Endothelial cell of umbilical vein (primary cell): ENCODE measurements at regions of chr10 and their contacts with region 1.

Region 1: GRCh38 chr10:15719899-15720634 is at the start of gene ITGA8:
- DNase-seq: peak; percentile 22
- H3K4me3 ChIP-seq: peak within 1 kb of the TSS in 2 of 3 experiments; percentile 6 to 25
- H3K27ac ChIP-seq: no peak within 1 kb of the TSS
- H3K4me1 ChIP-seq: peaks cover 4% of the 10 kb centered on the region
- H3K27me3 ChIP-seq: peaks cover 27 to 30% of the 10 kb centered on the region in 2 experiments
- CTCF ChIP-seq: peak; percentile 50 to 53
- POLR2A ChIP-seq: no peak
- total RNA-seq, gene ITGA8: 0.12 and 0.40 TPM in 2 replicates

Region 2: DNA sequence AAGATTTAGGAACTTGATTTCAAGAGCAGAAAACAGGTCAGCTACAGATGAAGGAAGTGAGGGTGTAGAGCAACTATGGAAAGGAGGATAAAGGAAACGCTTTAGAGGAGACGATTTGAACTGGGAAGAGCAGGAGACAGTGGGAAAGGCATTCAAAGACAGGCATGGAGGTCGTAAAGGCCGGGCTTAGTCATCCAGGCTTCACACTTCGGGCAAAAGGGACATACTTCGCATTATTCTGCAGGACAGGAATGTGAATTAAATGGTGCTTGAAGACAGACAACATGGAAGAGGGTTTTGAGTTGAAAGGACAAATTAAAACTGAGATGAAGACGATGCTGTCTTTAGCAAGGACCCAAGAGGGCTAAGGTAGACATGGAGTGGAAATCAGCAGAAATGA is 357.0 kb before region 1 on chr10:
- CTCF ChIA-PET with region 1: no interaction called
- POLR2A ChIA-PET with region 1: no interaction called
- dilution Hi-C with region 1: no loop called
- intact Hi-C with region 1: no loop called
- DNase-seq: no peak
- H3K4me3 ChIP-seq: no peak overlapping the region
- H3K27ac ChIP-seq: no peak overlapping the region
- H3K4me1 ChIP-seq: peaks cover 15% of the 10 kb centered on the region
- H3K27me3 ChIP-seq: no peaks in the 10 kb centered on the region
- CTCF ChIP-seq: no peak
- POLR2A ChIP-seq: no peak

Region 3: GRCh38 chr10:15427843-15428414 is 292.1 kb before region 1 on chr10:
- CTCF ChIA-PET with region 1: interaction called, 57 read pairs
- POLR2A ChIA-PET with region 1: no interaction called
- dilution Hi-C with region 1: no loop called
- intact Hi-C with region 1: no loop called
- DNase-seq: peak; percentile 67
- H3K4me3 ChIP-seq: no peak overlapping the region
- H3K27ac ChIP-seq: no peak overlapping the region
- H3K4me1 ChIP-seq: peaks cover 3% of the 10 kb centered on the region
- H3K27me3 ChIP-seq: peaks cover 0 to 2% of the 10 kb centered on the region in 2 experiments
- CTCF ChIP-seq: peak; percentile 33 to 36
- POLR2A ChIP-seq: no peak

Region 4: DNA sequence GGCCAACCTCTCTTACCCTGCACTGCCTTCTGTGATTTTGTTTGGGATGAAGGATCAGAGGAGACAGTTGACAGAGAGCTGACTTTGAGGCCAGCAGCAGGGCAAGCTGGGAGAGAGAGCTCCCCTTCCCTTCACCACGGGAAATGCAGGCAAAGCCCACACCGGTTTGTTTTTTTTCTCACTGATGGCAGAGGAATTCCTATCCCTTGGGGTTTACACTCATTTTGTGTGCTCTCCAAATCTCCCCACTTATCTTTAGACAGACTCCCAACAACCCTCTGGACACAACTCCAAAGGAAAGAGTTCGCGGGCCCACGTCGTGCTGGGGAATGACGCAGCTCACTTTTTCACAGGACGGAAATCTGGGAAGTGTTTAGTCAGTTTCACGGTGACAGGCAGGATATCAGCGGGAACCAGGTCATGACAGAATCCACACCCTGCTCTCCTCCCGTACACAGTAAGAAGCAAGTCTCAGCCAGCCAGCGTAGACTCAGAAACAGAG is 280.7 kb before region 1 on chr10:
- CTCF ChIA-PET with region 1: interaction called, 42 read pairs
- POLR2A ChIA-PET with region 1: no interaction called
- dilution Hi-C with region 1: no loop called
- intact Hi-C with region 1: loop called (anchors 1 kb)
- DNase-seq: peak; percentile 62
- H3K4me3 ChIP-seq: peak overlapping the region in 2 of 3 experiments; percentile 1 to 18
- H3K27ac ChIP-seq: peak overlapping the region; percentile 25
- H3K4me1 ChIP-seq: peaks cover 13% of the 10 kb centered on the region
- H3K27me3 ChIP-seq: peaks cover 0 to 3% of the 10 kb centered on the region in 2 experiments
- CTCF ChIP-seq: peak; percentile 41 to 59
- POLR2A ChIP-seq: no peak

Region 5: DNA sequence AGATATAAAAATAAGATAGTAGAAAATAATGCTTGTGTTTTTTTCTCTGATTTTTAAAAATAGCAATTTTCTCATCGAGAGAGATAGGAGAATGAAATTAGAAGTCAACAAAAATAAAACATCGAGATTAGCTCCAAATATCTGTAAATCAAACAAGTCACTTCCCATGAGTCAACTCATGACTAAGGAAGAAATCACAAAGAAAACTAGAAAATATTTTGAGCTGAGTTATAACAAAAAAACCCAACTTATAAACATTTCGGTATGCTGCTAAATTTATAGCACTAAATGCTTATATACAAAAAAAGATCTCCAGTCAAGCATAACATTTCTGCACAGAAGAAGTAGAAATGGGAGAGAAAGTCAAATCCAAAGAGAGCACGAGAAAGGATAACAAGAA is 140.5 kb before region 1 on chr10:
- CTCF ChIA-PET with region 1: interaction called, 54 read pairs
- POLR2A ChIA-PET with region 1: no interaction called
- dilution Hi-C with region 1: no loop called
- intact Hi-C with region 1: loop called (anchors 2 kb)
- DNase-seq: peak; percentile 52
- H3K4me3 ChIP-seq: peak overlapping the region in 2 of 3 experiments; percentile 12 to 48
- H3K27ac ChIP-seq: peak overlapping the region; percentile 45
- H3K4me1 ChIP-seq: peaks cover 11% of the 10 kb centered on the region
- H3K27me3 ChIP-seq: no peaks in the 10 kb centered on the region
- CTCF ChIP-seq: no peak
- POLR2A ChIP-seq: no peak

Region 6: GRCh38 chr10:15642095-15642494 is 78.0 kb before region 1 on chr10:
- CTCF ChIA-PET with region 1: interaction called, 10 read pairs
- POLR2A ChIA-PET with region 1: no interaction called
- dilution Hi-C with region 1: no loop called
- intact Hi-C with region 1: no loop called
- DNase-seq: peak; percentile 67
- H3K4me3 ChIP-seq: no peak overlapping the region
- H3K27ac ChIP-seq: no peak overlapping the region
- H3K4me1 ChIP-seq: peaks cover 8% of the 10 kb centered on the region
- H3K27me3 ChIP-seq: no peaks in the 10 kb centered on the region
- CTCF ChIP-seq: no peak
- POLR2A ChIP-seq: no peak

Region 7: GRCh38 chr10:15824498-15824897 is 104.4 kb after region 1 on chr10:
- CTCF ChIA-PET with region 1: interaction called, 6 read pairs
- POLR2A ChIA-PET with region 1: no interaction called
- dilution Hi-C with region 1: no loop called
- intact Hi-C with region 1: loop called (anchors 1 kb)
- DNase-seq: peak; percentile 58
- H3K4me3 ChIP-seq: no peak overlapping the region
- H3K27ac ChIP-seq: no peak overlapping the region
- H3K4me1 ChIP-seq: no peaks in the 10 kb centered on the region
- H3K27me3 ChIP-seq: no peaks in the 10 kb centered on the region
- CTCF ChIP-seq: peak in 1 of 2 donors; percentile 11
- POLR2A ChIP-seq: no peak